GM12878 (cell line): ENCODE measurements at regions of chr1 and their contacts with region 1.

Region 1: GRCh38 chr1:58162952-58163550 is 383.5 kb downstream of the OMA1 start:
- DNase-seq: no peak
- ATAC-seq: peak; percentile 76
- H3K4me3 ChIP-seq: no peak overlapping the region
- H3K27ac ChIP-seq: no peak overlapping the region
- H3K4me1 ChIP-seq: no peaks in the 10 kb centered on the region
- H3K27me3 ChIP-seq: no peaks in the 10 kb centered on the region
- CTCF ChIP-seq: peak; percentile 75 to 88 (median 83)
- EP300 ChIP-seq: no peak; a peak in 1 of 4 replicates
- POLR2A ChIP-seq: no peak
- RAD21 ChIP-seq: peak; percentile 73

Region 2: DNA sequence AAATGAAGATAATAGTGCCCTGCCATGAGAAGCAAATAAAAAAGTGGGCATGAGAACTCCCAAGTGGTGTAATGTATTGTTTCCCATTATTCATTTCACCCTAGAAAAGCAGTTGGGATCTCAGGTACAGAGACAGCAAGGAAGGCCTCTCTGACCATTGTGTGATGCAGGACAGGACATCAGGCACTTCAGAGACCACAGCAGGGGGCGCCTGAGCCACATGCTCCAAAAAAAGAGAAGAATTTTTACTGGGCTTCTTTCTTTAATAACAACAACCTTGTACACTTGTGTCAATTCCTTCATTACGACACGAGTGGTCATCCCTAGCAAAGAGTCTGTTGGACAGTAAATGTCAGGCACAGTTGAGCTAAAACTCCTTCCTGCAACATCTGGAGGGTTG is 149.8 kb before region 1 on chr1:
- CTCF ChIA-PET with region 1: interaction called, 21 read pairs
- POLR2A ChIA-PET with region 1: no interaction called
- RAD21 ChIA-PET with region 1: interaction called, 4 read pairs
- SMC1A ChIA-PET with region 1: interaction called, 18 read pairs
- in situ Hi-C with region 1: no loop called
- intact Hi-C with region 1: no loop called
- DNase-seq: no peak
- ATAC-seq: peak; percentile 36; the same call in 1 of the 3 replicates
- H3K4me3 ChIP-seq: no peak overlapping the region
- H3K27ac ChIP-seq: no peak overlapping the region
- H3K4me1 ChIP-seq: no peaks in the 10 kb centered on the region
- H3K27me3 ChIP-seq: no peaks in the 10 kb centered on the region
- CTCF ChIP-seq: peak; percentile 8 to 35 (median 25); a peak in 3 of 6 replicates
- EP300 ChIP-seq: no peak
- POLR2A ChIP-seq: no peak
- RAD21 ChIP-seq: peak; percentile 42

Region 3: GRCh38 chr1:58065520-58065919 is 97.5 kb before region 1 on chr1:
- CTCF ChIA-PET with region 1: interaction called, 55 read pairs
- POLR2A ChIA-PET with region 1: interaction called, 5 read pairs
- RAD21 ChIA-PET with region 1: interaction called, 61 read pairs
- SMC1A ChIA-PET with region 1: interaction called, 149 read pairs
- in situ Hi-C with region 1: no loop called
- intact Hi-C with region 1: loop called (anchors 1 kb)
- DNase-seq: no peak
- ATAC-seq: peak; percentile 76
- H3K4me3 ChIP-seq: no peak overlapping the region
- H3K27ac ChIP-seq: no peak overlapping the region
- H3K4me1 ChIP-seq: no peaks in the 10 kb centered on the region
- H3K27me3 ChIP-seq: peaks cover 0 to 3% of the 10 kb centered on the region in 2 experiments; a peak in 2 of 4 replicates
- CTCF ChIP-seq: peak; percentile 32 to 54 (median 37); a peak in 4 of 6 replicates
- EP300 ChIP-seq: no peak
- POLR2A ChIP-seq: no peak
- RAD21 ChIP-seq: peak; percentile 65

Region 4: DNA sequence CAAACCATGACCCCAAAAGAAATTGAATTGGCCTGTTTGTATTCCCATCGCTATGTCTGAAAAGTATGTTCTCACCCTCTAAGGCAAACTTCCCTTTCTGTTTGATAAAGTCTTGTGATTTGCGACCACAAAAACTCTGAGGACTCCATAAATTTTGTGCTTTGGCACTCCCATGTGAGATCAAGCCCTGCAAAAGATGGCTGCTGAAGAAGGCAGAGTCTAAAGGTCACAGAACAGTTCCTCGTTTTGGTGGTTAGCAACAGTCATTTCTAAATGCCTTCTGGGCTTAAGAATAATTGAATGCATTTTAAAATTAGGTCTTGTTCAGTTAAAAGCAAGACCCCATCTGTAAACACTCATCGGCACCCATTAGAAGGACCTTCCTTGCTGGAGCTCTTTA is 58.1 kb before region 1 on chr1:
- CTCF ChIA-PET with region 1: interaction called, 164 read pairs
- POLR2A ChIA-PET with region 1: interaction called, 64 read pairs
- RAD21 ChIA-PET with region 1: interaction called, 202 read pairs
- SMC1A ChIA-PET with region 1: interaction called, 258 read pairs
- in situ Hi-C with region 1: no loop called
- intact Hi-C with region 1: loop called (anchors 2 kb)
- DNase-seq: peak; percentile 68
- ATAC-seq: peak; percentile 80
- H3K4me3 ChIP-seq: no peak overlapping the region
- H3K27ac ChIP-seq: no peak overlapping the region
- H3K4me1 ChIP-seq: peaks cover 21% of the 10 kb centered on the region
- H3K27me3 ChIP-seq: no peaks in the 10 kb centered on the region
- CTCF ChIP-seq: no peak
- EP300 ChIP-seq: peak; percentile 90 to 97
- POLR2A ChIP-seq: no peak
- RAD21 ChIP-seq: no peak

Region 5: GRCh38 chr1:58546520-58547308 is 383.7 kb after region 1 on chr1 and contains the start of gene OMA1:
- CTCF ChIA-PET with region 1: interaction called, 12 read pairs
- POLR2A ChIA-PET with region 1: no interaction called
- RAD21 ChIA-PET with region 1: interaction called, 5 read pairs
- SMC1A ChIA-PET with region 1: no interaction called
- in situ Hi-C with region 1: no loop called
- intact Hi-C with region 1: loop called (anchors 5 kb)
- DNase-seq: peak; percentile 83
- ATAC-seq: peak; percentile 97
- H3K4me3 ChIP-seq: peak within 1 kb of the TSS; percentile 93
- H3K27ac ChIP-seq: peak within 1 kb of the TSS; percentile 67
- H3K4me1 ChIP-seq: no peaks in the 10 kb centered on the region
- H3K27me3 ChIP-seq: no peaks in the 10 kb centered on the region
- CTCF ChIP-seq: peak; percentile 98 to 99 (median 98); a peak in 5 of 6 replicates
- EP300 ChIP-seq: no peak
- POLR2A ChIP-seq: peak; percentile 98
- RAD21 ChIP-seq: peak; percentile 94
- polyA plus RNA-seq, gene OMA1: 48.3 to 53.4 TPM